ENCODE measurements at regions of chr3 and their contacts with region 1.

Region 1: DNA sequence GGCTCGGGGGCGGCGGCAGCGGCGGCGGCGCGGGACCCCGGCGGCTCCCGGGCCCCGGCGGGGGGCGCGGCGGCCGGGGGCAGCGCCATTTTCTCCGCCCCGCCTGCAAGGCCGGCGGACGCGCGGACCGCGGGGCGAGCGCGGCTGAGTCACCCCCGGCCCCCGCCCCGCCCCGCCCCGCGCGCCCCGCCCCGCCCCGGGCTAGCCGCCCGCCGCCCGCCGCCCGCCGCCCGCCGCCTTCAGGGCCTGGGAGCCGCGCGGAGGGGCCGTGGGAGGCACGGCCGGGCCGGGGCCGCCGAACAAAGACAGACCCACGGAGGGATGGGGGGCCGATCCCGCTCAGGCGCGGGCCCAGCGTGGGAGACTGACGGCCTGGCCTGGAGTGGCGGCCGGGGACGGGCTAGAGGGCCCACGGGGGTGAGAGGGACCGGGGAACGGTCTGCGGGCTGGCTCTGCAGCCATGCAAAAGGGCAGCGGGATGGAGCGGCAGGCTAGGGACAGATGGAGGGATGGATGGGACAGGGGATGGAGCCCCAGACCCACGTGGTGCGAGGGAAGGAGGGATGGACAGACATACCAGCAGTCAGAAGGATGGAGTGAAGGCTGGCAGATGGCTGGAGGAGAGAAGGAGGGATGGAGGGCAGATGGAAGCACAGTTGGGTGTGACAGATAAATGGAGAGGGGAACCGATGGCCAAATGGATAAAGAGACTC is at the start of gene EIF4E3:
- DNase-seq: peak; percentile 43
- H3K4me3 Mint-ChIP-seq: peak within 1 kb of the TSS; percentile 90
- H3K27ac Mint-ChIP-seq: peak within 1 kb of the TSS; percentile 95
- H3K4me1 Mint-ChIP-seq: peaks cover 75% of the 10 kb centered on the region
- H3K27me3 Mint-ChIP-seq: no peaks in the 10 kb centered on the region
- total RNA-seq, gene EIF4E3: 20.6 and 21.8 TPM in 2 replicates

Region 2: DNA sequence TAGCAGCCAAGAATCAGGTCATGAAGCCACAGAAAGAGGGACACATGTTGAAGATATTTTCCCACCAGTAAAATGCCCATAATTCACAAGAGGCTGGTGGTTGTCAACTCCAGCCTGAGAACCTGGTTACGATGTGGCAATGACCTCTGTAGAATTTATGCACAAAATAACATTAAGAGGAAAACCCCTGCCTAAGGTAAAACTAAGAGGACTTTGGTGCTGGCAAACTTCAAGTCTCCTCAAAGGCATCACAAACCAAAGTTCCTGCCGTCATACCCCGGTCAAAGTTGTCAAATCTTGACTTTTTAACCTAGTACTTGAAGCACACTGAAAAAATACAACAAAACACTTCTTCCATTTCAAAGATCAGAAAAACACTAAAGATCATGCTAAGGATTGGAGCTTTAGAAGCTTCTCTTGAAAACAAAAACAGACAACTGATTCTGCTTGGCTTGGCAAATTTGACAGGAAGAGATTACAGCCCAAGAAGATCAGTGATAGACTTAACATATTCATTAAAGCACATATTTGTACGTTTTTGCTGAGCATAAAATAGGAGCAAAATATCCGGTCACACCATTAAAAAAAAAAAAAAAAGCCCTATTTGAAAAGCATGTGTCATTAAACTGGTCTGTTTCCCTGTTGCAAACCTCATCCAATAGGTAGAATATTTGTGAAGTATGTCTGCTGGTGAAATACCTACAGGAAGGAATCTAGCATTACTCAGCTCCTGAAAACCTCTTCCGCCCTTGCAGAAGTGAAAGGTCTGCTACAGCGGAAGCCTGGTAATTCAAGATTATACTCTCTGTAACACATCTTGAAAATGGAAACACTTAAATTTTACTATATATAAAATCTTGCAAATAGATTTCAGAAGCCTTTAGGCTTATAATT is 23.1 kb before region 1 on chr3:
- intact Hi-C with region 1: loop called (anchors 2 kb)
- DNase-seq: peak; percentile 38
- H3K4me3 Mint-ChIP-seq: peak overlapping the region; percentile 66
- H3K27ac Mint-ChIP-seq: peak overlapping the region; percentile 93
- H3K4me1 Mint-ChIP-seq: peaks cover 61% of the 10 kb centered on the region
- H3K27me3 Mint-ChIP-seq: no peaks in the 10 kb centered on the region

Region 3: GRCh38 chr3:71796290-71796689 is 70.9 kb after region 1 on chr3:
- intact Hi-C with region 1: no loop called
- DNase-seq: no peak
- H3K4me3 Mint-ChIP-seq: no peak overlapping the region
- H3K27ac Mint-ChIP-seq: no peak overlapping the region
- H3K4me1 Mint-ChIP-seq: no peaks in the 10 kb centered on the region
- H3K27me3 Mint-ChIP-seq: peaks cover 27% of the 10 kb centered on the region

Region 4: GRCh38 chr3:71875461-71875947 is 150.1 kb after region 1 on chr3:
- intact Hi-C with region 1: loop called (anchors 2 kb)
- DNase-seq: peak; percentile 67
- H3K4me3 Mint-ChIP-seq: no peak overlapping the region
- H3K27ac Mint-ChIP-seq: peak overlapping the region; percentile 59
- H3K4me1 Mint-ChIP-seq: peaks cover 38% of the 10 kb centered on the region
- H3K27me3 Mint-ChIP-seq: peaks cover 8% of the 10 kb centered on the region

Region 5: GRCh38 chr3:72270072-72270681 is 544.7 kb after region 1 on chr3:
- intact Hi-C with region 1: loop called (anchors 5 kb)
- DNase-seq: no peak
- H3K4me3 Mint-ChIP-seq: no peak overlapping the region
- H3K27ac Mint-ChIP-seq: peak overlapping the region; percentile 74
- H3K4me1 Mint-ChIP-seq: peaks cover 70% of the 10 kb centered on the region
- H3K27me3 Mint-ChIP-seq: no peaks in the 10 kb centered on the region

Region 6: GRCh38 chr3:72447059-72447946 is 721.9 kb after region 1 on chr3:
- intact Hi-C with region 1: loop called (anchors 5 kb)
- DNase-seq: peak; percentile 93
- H3K4me3 Mint-ChIP-seq: peak overlapping the region; percentile 71
- H3K27ac Mint-ChIP-seq: peak overlapping the region; percentile 80
- H3K4me1 Mint-ChIP-seq: peaks cover 50% of the 10 kb centered on the region
- H3K27me3 Mint-ChIP-seq: peaks cover 1% of the 10 kb centered on the region

Region 7: GRCh38 chr3:72847751-72848702 is 1122.6 kb after region 1 on chr3 and contains the start of gene SHQ1:
- intact Hi-C with region 1: loop called (anchors 1 kb)
- DNase-seq: peak; percentile 92
- H3K4me3 Mint-ChIP-seq: peak within 1 kb of the TSS; percentile 99
- H3K27ac Mint-ChIP-seq: peak within 1 kb of the TSS; percentile 88
- H3K4me1 Mint-ChIP-seq: peaks cover 62% of the 10 kb centered on the region
- H3K27me3 Mint-ChIP-seq: peaks cover 9% of the 10 kb centered on the region
- total RNA-seq, gene SHQ1: 46.1 and 48.5 TPM in 2 replicates